Aorta (tissue), 5 donors: ENCODE measurements at regions of chr10 and their contacts with region 1.

Region 1: GRCh38 chr10:115606086-115606485 is 512.9 kb downstream of the ATRNL1 start:
- DNase-seq: no peak
- ATAC-seq: no peak
- H3K4me3 ChIP-seq: no peak overlapping the region
- H3K27ac ChIP-seq: no peak overlapping the region
- H3K4me1 ChIP-seq: no peaks in the 10 kb centered on the region
- H3K27me3 ChIP-seq: no peaks in the 10 kb centered on the region

Region 2: DNA sequence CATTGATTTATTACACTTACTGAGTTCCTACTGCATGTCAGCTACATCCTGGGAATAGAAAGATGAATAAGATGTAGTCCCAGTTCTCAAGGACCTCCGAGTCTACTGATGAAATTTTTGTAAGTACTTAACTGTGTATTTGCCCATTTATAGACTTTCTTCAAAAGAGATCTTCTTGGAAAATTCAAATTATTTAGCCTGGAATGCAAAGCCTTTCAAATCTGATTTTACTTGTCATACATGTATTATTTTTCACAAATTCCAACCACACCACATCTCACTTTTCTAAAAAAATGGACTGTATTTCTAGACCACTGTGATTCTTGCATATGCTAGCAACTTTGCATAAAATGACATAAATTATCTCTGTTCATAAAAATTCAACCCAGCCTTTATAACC is 68.4 kb after region 1 on chr10:
- intact Hi-C with region 1: no loop called
- DNase-seq: no peak
- ATAC-seq: no peak
- H3K4me3 ChIP-seq: no peak overlapping the region
- H3K27ac ChIP-seq: no peak overlapping the region
- H3K4me1 ChIP-seq: no peaks in the 10 kb centered on the region
- H3K27me3 ChIP-seq: no peaks in the 10 kb centered on the region

Region 3: DNA sequence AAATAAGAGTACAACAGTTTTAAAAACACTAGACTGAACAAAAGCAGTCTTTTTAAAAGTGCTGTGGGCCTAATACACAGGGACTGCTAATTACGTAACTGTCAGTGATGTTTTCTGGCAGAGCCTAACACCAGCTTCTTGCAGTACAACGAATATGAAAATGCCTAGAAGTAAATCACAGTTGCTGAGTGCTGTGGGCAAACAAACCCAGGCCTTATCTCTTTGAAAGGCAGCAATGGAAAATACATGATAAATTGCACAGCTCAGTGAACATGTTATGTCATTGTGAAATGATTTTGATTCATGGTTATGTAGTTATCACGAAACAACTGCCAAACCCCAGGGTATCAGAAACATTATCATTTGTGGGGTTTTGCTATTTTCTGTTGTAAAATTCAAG is 238.5 kb after region 1 on chr10:
- intact Hi-C with region 1: loop called in 1 of 2 experiments (anchors 5 kb)
- DNase-seq: no peak
- ATAC-seq: no peak
- H3K4me3 ChIP-seq: no peak overlapping the region
- H3K27ac ChIP-seq: no peak overlapping the region
- H3K4me1 ChIP-seq: no peaks in the 10 kb centered on the region
- H3K27me3 ChIP-seq: no peaks in the 10 kb centered on the region